ENCODE measurements at regions of chrX and their contacts with region 1.

Region 1: DNA sequence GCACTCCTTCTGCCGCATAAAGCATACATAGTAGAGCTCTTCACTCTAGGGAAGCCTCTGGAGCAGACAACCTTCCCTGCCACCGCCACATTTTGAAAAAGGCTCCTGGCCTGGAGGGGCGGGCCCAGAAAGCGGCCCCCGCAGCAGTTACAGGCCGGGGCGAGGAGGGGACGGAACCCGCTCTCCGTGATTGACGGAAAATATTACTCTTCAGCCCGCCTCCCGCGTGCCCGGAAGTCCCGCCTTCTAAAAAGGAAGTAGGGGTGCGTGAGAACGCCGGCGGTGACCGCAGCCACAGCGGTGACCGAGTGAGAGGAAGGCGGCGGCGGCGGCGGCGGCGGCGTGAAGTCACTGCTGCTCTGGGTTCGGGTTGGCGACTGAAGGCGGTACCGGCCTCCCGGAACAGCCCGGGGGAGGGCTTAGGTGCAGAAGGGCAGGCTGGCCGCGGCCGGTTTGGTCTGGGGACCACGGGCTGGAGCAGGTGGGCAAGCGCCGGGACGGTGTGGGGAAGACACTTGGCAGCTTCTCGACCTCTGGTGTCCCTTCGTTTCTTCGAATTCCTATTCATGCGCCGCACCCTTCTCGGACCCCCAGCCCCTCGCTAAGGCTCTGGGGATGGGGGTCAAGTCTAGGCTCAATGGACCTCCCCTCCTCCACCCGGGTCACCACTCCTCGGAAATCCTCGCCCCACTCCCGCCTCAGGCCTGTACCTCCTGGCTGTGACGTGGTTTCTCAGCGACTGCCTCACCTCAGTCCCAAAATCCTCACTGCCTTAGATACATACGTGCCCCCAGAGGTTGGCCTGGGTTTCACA is at the start of gene HCCS:
- DNase-seq: peak; percentile 50 to 91
- H3K4me3 ChIP-seq: peak within 1 kb of the TSS; percentile 52 to 74
- H3K27ac ChIP-seq: peak within 1 kb of the TSS; percentile 70 to 83
- H3K4me1 ChIP-seq: peaks cover 0 to 9% of the 10 kb centered on the region in 2 donors
- H3K27me3 ChIP-seq: no peaks in the 10 kb centered on the region
- CTCF ChIP-seq: no peak
- total RNA-seq, gene HCCS: 65.0 TPM

Region 2: GRCh38 chrX:10636337-10636736 is 474.9 kb before region 1 on chrX:
- intact Hi-C with region 1: loop called (anchors 5 kb)
- DNase-seq: no peak
- H3K4me3 ChIP-seq: peak overlapping the region in 1 of 2 donors; percentile 31
- H3K27ac ChIP-seq: peak overlapping the region in 1 of 2 donors; percentile 44
- H3K4me1 ChIP-seq: peaks cover 0 to 2% of the 10 kb centered on the region in 2 donors
- H3K27me3 ChIP-seq: no peaks in the 10 kb centered on the region
- CTCF ChIP-seq: peak; percentile 15 to 47 (median 20)

Region 3: GRCh38 chrX:11040405-11040804 is 70.8 kb before region 1 on chrX:
- intact Hi-C with region 1: no loop called
- DNase-seq: no peak
- H3K4me3 ChIP-seq: no peak overlapping the region
- H3K27ac ChIP-seq: no peak overlapping the region
- H3K4me1 ChIP-seq: no peaks in the 10 kb centered on the region
- H3K27me3 ChIP-seq: no peaks in the 10 kb centered on the region
- CTCF ChIP-seq: no peak

Region 4: GRCh38 chrX:11758400-11759171 is 647.3 kb after region 1 on chrX:
- intact Hi-C with region 1: loop called (anchors 1 kb)
- DNase-seq: peak; percentile 29 to 92
- H3K4me3 ChIP-seq: peak overlapping the region; percentile 64 to 73
- H3K27ac ChIP-seq: peak overlapping the region; percentile 75 to 90
- H3K4me1 ChIP-seq: no peaks in the 10 kb centered on the region
- H3K27me3 ChIP-seq: no peaks in the 10 kb centered on the region
- CTCF ChIP-seq: peak; percentile 52 to 60 (median 59)